Vagina (tissue), 2 donors: ENCODE measurements at regions of chr3 and their contacts with region 1.

Region 1: DNA sequence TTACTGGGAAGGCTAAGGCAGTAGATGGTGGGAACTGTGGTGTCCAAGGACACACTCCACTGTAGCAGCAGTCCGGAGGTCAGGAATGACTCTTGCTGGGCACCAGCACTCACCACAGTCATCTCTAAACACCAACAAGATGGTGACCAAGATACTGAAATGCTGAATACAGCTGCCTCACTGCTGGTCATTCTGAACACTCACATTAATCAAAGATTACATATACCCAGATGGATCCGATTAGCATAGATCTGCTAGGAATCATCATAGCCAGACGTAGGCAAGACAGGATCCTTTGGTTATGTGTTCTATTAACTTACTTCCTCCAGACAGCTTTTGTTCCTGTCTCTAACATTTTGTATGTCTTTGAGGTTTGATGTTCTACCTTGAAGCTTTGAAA is 134.9 kb upstream of the BFSP2 start:
- DNase-seq: no peak
- H3K4me3 ChIP-seq: no peak overlapping the region
- H3K27ac ChIP-seq: no peak overlapping the region
- H3K4me1 ChIP-seq: peaks cover 7% of the 10 kb centered on the region
- H3K27me3 ChIP-seq: no peaks in the 10 kb centered on the region
- CTCF ChIP-seq: no peak
- POLR2A ChIP-seq: no peak

Region 2: GRCh38 chr3:132720228-132720627 is 544.7 kb before region 1 on chr3:
- intact Hi-C with region 1: no loop called
- DNase-seq: no peak
- H3K4me3 ChIP-seq: peak overlapping the region; percentile 91 to 96
- H3K27ac ChIP-seq: no peak overlapping the region
- H3K4me1 ChIP-seq: peaks cover 34% of the 10 kb centered on the region
- H3K27me3 ChIP-seq: no peaks in the 10 kb centered on the region
- CTCF ChIP-seq: no peak
- POLR2A ChIP-seq: no peak

Region 3: DNA sequence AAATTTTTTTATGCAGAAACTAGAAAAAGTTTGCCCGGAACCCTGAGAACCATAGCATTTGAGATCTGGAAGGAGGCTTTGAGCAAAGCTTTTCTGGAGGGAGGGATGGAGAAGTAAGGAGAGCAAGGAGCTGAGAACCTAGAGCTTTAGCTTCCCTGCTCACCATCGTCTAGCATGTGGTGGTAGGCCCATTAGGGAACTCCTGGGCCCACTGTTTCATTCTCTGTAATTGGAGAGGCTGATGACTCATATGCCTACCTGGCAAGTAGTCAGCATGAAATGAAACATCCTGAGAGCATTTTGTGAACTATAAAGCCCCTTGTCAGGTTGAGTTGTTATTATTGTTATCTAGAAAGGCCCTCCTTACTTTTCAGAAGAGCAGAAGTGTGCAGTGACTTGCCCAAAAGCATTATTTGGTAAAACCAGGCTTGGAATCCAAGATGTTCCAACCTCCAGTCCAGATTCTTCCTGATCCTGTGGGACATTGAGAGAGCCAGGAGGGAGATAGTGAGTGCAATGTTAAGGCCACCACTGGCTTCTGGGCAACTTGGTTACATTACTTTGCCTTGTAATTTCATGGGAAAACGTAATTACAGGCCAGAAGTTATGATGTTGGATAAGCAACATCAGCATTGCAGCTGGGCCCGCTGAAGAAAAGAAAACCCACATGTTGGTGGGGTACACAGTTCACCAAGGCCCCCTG is 30.4 kb after region 1 on chr3:
- intact Hi-C with region 1: loop called (anchors 1 kb)
- DNase-seq: no peak
- H3K4me3 ChIP-seq: no peak overlapping the region
- H3K27ac ChIP-seq: no peak overlapping the region
- H3K4me1 ChIP-seq: no peaks in the 10 kb centered on the region
- H3K27me3 ChIP-seq: no peaks in the 10 kb centered on the region
- CTCF ChIP-seq: no peak
- POLR2A ChIP-seq: no peak